Left ventricle myocardium superior (tissue), 1 donor: ENCODE measurements at regions of chr19 and their contacts with region 1.

Region 1: GRCh38 chr19:4732680-4733114 is 9.1 kb upstream of the DPP9 start:
- DNase-seq: no peak
- ATAC-seq: peak; percentile 91

Region 2: DNA sequence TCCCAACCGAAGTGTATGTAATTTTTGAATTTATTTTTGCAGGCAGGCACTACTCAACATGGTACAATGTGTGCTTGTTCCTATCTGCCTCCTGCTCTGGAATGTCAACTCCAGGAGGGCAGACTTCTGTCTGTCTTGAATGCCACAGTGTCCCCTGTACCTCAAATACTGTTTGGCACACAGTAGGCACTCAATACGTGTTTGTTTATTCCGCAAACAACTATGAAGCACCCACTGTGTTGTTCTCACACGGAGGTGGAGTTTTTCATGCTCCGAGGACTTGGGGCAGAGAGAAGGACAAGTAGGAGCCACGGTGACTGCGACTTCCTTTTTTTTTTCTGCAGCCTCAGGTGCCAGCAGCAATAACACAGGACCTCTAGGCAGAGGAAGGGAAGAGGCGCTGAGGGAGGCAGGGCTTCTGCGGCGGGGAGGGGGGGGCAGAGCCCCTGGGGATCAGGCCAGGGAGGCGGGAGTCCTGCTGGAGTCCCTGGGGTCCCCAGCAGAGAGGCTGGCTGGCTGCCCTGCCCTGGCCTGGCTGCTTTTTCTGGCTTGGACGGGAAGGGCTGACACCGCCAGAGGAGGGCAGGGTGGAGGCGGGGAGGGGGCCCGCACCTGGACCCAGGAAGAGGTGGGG is 122.7 kb before region 1 on chr19:
- intact Hi-C with region 1: no loop called
- DNase-seq: peak; percentile 74
- ATAC-seq: peak; percentile 87

Region 3: DNA sequence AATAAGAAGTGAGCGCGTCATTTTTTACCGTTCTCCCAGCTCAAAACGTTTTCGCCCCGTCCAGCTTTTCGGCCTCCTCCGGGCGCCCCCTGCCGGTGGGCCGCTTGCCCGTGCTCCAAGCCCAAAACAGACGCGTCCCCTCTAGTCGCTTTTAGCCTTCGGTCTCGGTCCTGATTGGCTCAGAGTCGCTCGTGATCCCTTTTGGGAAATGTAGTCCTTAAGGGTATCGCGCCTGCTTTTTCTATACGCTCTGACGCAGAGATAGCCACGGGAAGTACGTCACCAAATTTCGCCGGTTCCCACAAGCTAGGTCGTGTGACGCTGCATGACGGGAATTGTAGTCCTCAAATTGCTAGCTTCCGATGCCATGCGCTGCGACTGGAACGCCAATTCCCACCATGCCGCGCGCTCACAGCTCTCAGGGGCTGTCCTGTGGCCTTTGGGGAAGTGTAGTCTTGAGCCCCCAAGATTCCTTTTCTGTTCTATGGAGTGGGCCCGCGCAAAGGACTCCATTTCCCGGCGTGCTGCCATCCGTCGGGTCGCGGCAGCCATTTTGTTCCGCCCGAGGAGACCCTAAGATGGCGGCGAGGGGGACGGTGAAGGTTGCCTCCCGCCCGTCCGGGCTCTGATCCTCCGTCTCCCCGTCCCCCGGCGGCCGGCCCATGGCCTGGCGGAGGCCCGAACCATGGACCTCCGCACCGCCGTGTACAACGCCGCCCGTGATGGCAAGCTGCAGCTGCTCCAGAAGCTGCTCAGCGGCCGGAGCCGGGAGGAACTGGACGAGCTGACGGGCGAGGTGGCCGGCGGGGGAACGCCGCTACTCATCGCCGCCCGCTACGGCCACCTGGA is 58.7 kb after region 1 on chr19 and contains the start of gene FEM1A:
- intact Hi-C with region 1: loop called (anchors 5 kb)
- DNase-seq: peak; percentile 98
- ATAC-seq: peak; percentile 99
- total RNA-seq, gene FEM1A: 49.6 TPM

Region 4: GRCh38 chr19:4968462-4969291 is 236.0 kb after region 1 on chr19 and contains the start of gene KDM4B:
- intact Hi-C with region 1: no loop called
- DNase-seq: peak; percentile 100
- ATAC-seq: peak; percentile 95
- total RNA-seq, gene KDM4B: 36.4 TPM

Region 5: GRCh38 chr19:5018224-5019015 is 285.7 kb after region 1 on chr19:
- intact Hi-C with region 1: no loop called
- DNase-seq: no peak
- ATAC-seq: no peak